Activated B cell treated with CpG ODN at 0.5 μM for 24 hours (primary cell): ENCODE measurements at regions of chr1 and their contacts with region 1.

Region 1: GRCh38 chr1:53238197-53239155 is at the start of gene MAGOH:
- DNase-seq: peak; percentile 93
- ATAC-seq: peak; percentile 100
- H3K4me3 Mint-ChIP-seq: peak within 1 kb of the TSS; percentile 97
- H3K27ac Mint-ChIP-seq: peak within 1 kb of the TSS; percentile 91
- H3K4me1 Mint-ChIP-seq: peaks cover 32% of the 10 kb centered on the region
- H3K27me3 Mint-ChIP-seq: no peaks in the 10 kb centered on the region
- CTCF ChIP-seq: no peak
- total RNA-seq, gene MAGOH: 56.6 and 65.0 TPM in 2 replicates

Region 2: DNA sequence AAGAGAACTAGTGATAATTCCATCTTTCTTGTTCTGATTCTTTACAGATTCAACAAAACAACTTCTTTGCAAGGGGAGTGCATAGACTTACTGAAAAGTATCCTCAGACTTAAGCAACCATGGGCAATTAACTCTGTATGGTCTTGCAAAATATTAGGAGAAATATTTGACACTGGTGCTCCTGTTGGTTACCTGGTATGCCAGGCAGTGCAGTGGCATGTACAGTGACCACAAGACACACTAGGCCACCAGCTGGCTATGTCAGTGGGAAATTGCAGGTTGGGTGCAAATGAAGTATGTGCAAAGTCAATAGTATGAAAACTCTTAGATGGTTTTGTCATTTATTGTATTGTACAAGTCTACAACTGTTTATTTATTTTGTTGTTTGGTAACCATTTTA is 1753.9 kb before region 1 on chr1:
- CTCF ChIA-PET with region 1: no interaction called
- POLR2A ChIA-PET with region 1: no interaction called
- intact Hi-C with region 1: no loop called
- DNase-seq: no peak
- ATAC-seq: no peak
- H3K4me3 Mint-ChIP-seq: no peak overlapping the region
- H3K27ac Mint-ChIP-seq: no peak overlapping the region
- H3K4me1 Mint-ChIP-seq: peaks cover 35% of the 10 kb centered on the region
- H3K27me3 Mint-ChIP-seq: no peaks in the 10 kb centered on the region
- CTCF ChIP-seq: no peak

Region 3: GRCh38 chr1:53183095-53183990 is 55.1 kb before region 1 on chr1:
- CTCF ChIA-PET with region 1: no interaction called
- POLR2A ChIA-PET with region 1: no interaction called
- intact Hi-C with region 1: no loop called
- DNase-seq: no peak
- ATAC-seq: no peak
- H3K4me3 Mint-ChIP-seq: no peak overlapping the region
- H3K27ac Mint-ChIP-seq: no peak overlapping the region
- H3K4me1 Mint-ChIP-seq: no peaks in the 10 kb centered on the region
- H3K27me3 Mint-ChIP-seq: peaks cover 10% of the 10 kb centered on the region
- CTCF ChIP-seq: no peak

Region 4: DNA sequence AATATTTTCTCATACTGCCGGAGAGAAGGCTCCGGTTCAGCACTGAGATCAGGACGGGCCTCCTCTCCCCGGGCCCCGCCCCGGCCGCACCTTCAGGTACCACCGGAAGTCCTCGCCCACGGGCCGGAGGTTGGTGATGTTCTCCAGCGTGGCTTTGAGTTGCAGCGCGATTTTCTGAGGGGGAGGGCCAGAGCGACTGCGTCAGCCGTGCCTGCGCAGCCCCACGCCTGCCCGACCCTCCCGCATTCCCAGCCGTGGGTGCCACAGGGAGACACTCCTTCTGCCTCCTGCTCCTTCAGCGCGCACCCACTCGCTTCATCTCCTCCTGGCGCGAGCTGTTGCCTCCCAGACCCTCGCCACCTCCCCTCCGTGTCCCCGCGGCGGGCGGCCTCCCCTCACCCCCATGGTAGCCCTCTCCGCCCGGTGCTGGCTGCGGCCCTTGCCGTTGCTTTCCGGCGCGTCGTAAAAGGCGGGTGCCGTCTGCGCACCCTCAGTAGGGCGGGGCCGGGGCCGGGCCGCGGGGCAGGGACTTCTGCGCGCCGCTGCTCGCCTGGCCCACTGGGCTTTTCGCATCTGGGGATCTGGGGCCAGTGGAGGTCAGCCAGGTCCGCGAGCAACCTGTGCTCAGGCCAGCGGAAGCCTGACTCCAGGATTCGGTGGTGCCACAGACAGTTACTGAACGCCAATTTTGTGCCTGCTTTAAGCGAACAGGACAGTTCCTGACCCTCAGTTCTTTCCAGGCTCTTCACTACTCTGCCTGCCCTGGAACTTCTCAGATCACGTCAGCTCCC is 18.1 kb before region 1 on chr1 and contains the start of gene CZIB:
- CTCF ChIA-PET with region 1: no interaction called
- POLR2A ChIA-PET with region 1: interaction called, 16 read pairs
- intact Hi-C with region 1: loop called (anchors 1 kb)
- DNase-seq: peak; percentile 98
- ATAC-seq: peak; percentile 92
- H3K4me3 Mint-ChIP-seq: peak within 1 kb of the TSS; percentile 94
- H3K27ac Mint-ChIP-seq: peak within 1 kb of the TSS; percentile 97
- H3K4me1 Mint-ChIP-seq: peaks cover 20% of the 10 kb centered on the region
- H3K27me3 Mint-ChIP-seq: no peaks in the 10 kb centered on the region
- CTCF ChIP-seq: no peak
- total RNA-seq, gene CZIB: 48.9 and 51.8 TPM in 2 replicates

Region 5: DNA sequence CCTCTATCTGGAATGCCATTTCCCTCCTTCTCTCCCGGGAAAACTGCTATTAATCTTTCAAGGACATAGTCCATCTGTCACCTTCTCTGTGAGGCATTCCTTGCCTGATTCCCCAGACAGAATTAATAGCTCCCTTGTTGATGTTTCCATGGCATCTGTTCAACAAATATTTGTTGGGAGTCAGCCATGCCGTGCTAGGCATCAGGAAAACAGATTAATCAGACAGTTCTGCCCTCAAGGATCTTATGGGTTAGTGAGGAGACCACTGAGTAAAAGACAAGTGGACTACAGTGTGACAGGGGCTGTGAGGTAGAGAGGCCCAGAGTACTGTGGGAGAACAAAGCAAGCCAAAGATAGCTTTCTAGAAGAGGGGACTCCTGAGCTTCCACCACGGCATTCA is 11.2 kb after region 1 on chr1:
- CTCF ChIA-PET with region 1: no interaction called
- POLR2A ChIA-PET with region 1: no interaction called
- intact Hi-C with region 1: no loop called
- DNase-seq: no peak
- ATAC-seq: no peak
- H3K4me3 Mint-ChIP-seq: no peak overlapping the region
- H3K27ac Mint-ChIP-seq: no peak overlapping the region
- H3K4me1 Mint-ChIP-seq: peaks cover 26% of the 10 kb centered on the region
- H3K27me3 Mint-ChIP-seq: no peaks in the 10 kb centered on the region
- CTCF ChIP-seq: no peak